CD8-positive, alpha-beta memory T cell (primary cell): ENCODE measurements at regions of chr1 and their contacts with region 1.

Region 1: DNA sequence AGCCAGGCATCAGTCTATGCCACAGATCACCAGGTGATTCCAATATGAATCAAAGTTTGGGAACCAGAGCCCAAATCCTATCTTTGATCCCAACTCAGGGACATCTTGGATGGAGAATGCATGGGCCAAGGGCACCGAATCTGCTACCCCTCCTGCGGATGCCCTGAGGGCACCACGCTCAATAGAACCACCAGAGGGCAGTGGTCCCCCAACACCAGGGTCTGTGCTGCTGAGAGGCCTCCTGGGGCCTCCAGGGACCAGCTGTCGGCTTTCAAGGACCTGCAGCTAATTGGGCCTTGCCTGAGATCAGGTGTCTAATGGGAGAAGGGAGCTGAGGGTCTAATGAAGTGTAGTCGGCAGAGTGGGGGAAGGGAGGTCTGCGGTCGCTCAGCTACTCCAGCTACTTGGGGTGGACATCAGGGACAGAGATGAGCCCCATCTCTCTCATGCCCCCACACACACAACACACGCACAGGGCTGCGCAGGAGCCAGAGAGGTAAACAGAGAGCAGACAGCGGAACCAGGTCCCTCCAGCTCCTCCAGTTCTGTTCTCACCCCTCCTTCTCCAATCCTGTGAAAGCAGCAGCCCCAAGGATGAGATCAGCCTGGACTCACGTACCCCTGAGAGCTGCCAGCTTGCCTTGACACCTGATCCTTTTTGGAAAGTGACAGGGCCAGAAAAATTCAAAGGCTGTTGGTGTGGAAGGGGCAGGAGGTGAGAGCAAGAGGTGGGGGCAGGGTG is 34.9 kb upstream of the PPP1R15B start:
- DNase-seq: peak; percentile 65 to 85 (median 69)
- H3K4me3 ChIP-seq: no peak overlapping the region
- H3K4me3 Mint-ChIP-seq: no peak overlapping the region
- H3K27ac ChIP-seq: no peak overlapping the region
- H3K27ac Mint-ChIP-seq: peak overlapping the region; percentile 48 to 99 (median 90)
- H3K4me1 ChIP-seq: peaks cover 8% of the 10 kb centered on the region
- H3K4me1 Mint-ChIP-seq: peaks cover 13 to 20% (median 18%) of the 10 kb centered on the region in 3 donors
- H3K27me3 ChIP-seq: no peaks in the 10 kb centered on the region
- H3K27me3 Mint-ChIP-seq: no peaks in the 10 kb centered on the region

Region 2: GRCh38 chr1:204431310-204432165 is 15.0 kb before region 1 on chr1:
- CTCF ChIA-PET with region 1: interaction called, 57 read pairs
- POLR2A ChIA-PET with region 1: no interaction called
- DNase-seq: peak; percentile 62 to 82 (median 68)
- H3K4me3 ChIP-seq: no peak overlapping the region
- H3K4me3 Mint-ChIP-seq: no peak overlapping the region
- H3K27ac ChIP-seq: no peak overlapping the region
- H3K27ac Mint-ChIP-seq: peak overlapping the region in 5 of 8 donors; percentile 17 to 71 (median 51)
- H3K4me1 ChIP-seq: no peaks in the 10 kb centered on the region
- H3K4me1 Mint-ChIP-seq: peaks cover 0 to 7% (median 4%) of the 10 kb centered on the region in 3 donors
- H3K27me3 ChIP-seq: no peaks in the 10 kb centered on the region
- H3K27me3 Mint-ChIP-seq: no peaks in the 10 kb centered on the region

Region 3: DNA sequence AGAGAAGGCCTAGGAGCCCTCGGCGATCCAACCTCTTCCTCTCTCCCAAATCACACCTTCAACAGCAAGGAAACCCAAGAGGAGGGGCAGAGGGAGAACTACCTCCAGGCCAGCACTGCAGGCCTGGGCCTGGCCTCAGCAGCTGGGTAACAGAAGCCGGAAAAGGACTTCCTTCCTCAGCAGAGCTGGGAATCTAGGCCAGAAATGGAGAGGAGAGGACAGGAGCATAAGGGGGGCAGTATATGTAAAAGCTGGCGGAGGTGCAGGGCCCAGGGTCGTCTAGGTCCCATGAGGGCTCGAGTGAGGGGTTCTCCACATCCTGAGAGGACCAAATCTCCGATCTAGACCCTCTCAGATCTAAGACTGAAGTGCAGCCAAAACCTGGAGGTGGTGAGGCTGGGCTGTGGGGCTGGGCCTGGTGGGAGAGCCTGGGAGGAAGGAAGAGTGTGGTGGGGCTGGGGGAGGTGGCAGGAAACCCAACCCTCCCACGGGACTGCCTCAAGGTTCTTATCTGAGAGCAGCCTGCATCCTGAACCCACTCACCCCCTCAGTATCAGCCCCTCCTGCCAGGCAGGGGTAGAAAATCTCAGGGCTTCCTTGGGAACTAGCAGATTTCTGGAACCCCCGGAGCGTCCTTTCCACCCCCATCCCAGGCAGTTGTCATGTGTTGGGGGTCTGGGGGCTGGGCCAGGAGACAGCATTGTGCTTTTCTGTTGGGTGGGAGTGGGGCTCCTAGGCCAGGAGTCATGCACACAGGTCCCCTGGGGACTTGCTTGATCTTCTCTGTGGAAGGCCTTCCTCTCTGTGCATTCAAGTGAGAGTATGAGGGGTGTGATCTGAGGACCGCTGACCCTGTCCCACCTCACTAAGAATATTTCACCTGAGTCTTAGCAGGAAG is 15.0 kb after region 1 on chr1:
- CTCF ChIA-PET with region 1: interaction called, 15 read pairs
- POLR2A ChIA-PET with region 1: no interaction called
- DNase-seq: peak in 3 of 5 donors; percentile 15 to 26 (median 20)
- H3K4me3 ChIP-seq: no peak overlapping the region
- H3K4me3 Mint-ChIP-seq: peak overlapping the region in 6 of 7 donors; percentile 55 to 71 (median 65)
- H3K27ac ChIP-seq: peak overlapping the region; percentile 10
- H3K27ac Mint-ChIP-seq: peak overlapping the region; percentile 76 to 94 (median 92)
- H3K4me1 ChIP-seq: peaks cover 44% of the 10 kb centered on the region
- H3K4me1 Mint-ChIP-seq: peaks cover 49 to 65% (median 64%) of the 10 kb centered on the region in 3 donors
- H3K27me3 ChIP-seq: no peaks in the 10 kb centered on the region
- H3K27me3 Mint-ChIP-seq: no peaks in the 10 kb centered on the region

Region 4: DNA sequence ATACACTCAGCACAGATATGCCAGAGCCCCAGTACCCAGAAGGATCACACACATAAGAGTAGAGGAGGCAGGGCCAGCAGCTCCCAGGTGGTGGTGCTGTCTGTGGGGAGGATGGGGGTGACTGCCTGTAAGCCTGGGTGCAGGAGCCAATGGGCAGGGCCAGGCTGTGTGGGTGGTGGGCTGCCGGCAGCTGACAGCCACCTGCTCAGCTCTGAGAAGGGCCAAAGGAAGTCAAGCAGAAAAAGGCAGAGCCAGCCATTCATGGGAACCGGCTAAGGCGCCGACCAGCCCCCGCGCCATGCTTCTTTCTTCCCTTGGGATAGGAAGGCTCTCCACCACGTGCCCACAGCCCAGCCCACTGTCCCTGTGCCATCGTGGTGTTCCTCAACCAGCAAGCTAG is 34.0 kb after region 1 on chr1:
- CTCF ChIA-PET with region 1: interaction called, 10 read pairs
- POLR2A ChIA-PET with region 1: no interaction called
- DNase-seq: no peak
- H3K4me3 ChIP-seq: no peak overlapping the region
- H3K4me3 Mint-ChIP-seq: peak overlapping the region in 3 of 7 donors; percentile 22 to 54 (median 24)
- H3K27ac ChIP-seq: no peak overlapping the region
- H3K27ac Mint-ChIP-seq: peak overlapping the region in 5 of 8 donors; percentile 29 to 63 (median 58)
- H3K4me1 ChIP-seq: peaks cover 34% of the 10 kb centered on the region
- H3K4me1 Mint-ChIP-seq: peaks cover 56 to 85% (median 84%) of the 10 kb centered on the region in 3 donors
- H3K27me3 ChIP-seq: no peaks in the 10 kb centered on the region
- H3K27me3 Mint-ChIP-seq: no peaks in the 10 kb centered on the region

Region 5: DNA sequence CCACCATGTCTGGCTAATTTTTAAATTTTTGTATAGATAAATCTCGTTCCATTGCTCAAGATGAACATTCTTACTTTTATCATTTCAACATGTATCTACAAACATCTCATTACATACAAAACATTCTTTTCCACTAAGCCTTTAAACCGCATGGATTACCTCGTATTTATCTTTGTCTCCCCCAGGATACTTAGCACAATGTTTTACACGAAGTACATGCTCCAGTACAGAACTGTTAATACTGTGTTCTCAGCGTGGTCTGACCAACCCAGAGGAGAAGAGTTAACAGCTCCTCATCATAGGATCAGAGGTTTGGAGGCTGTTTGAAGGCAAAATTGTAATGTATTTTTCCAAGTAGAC is 40.7 kb after region 1 on chr1:
- CTCF ChIA-PET with region 1: interaction called, 496 read pairs
- POLR2A ChIA-PET with region 1: no interaction called
- DNase-seq: no peak
- H3K4me3 ChIP-seq: no peak overlapping the region
- H3K4me3 Mint-ChIP-seq: no peak overlapping the region
- H3K27ac ChIP-seq: no peak overlapping the region
- H3K27ac Mint-ChIP-seq: peak overlapping the region in 2 of 8 donors; percentile 45 to 51
- H3K4me1 ChIP-seq: peaks cover 10% of the 10 kb centered on the region
- H3K4me1 Mint-ChIP-seq: peaks cover 38 to 71% (median 66%) of the 10 kb centered on the region in 3 donors
- H3K27me3 ChIP-seq: no peaks in the 10 kb centered on the region
- H3K27me3 Mint-ChIP-seq: no peaks in the 10 kb centered on the region

Region 6: GRCh38 chr1:204494281-204495077 is 47.9 kb after region 1 on chr1 and contains the start of gene PIK3C2B:
- CTCF ChIA-PET with region 1: interaction called, 496 read pairs
- POLR2A ChIA-PET with region 1: interaction called, 9 read pairs
- DNase-seq: peak; percentile 54 to 78 (median 69)
- H3K4me3 ChIP-seq: peak within 1 kb of the TSS; percentile 58
- H3K4me3 Mint-ChIP-seq: peak within 1 kb of the TSS; percentile 85 to 97 (median 94)
- H3K27ac ChIP-seq: peak within 1 kb of the TSS; percentile 77
- H3K27ac Mint-ChIP-seq: peak within 1 kb of the TSS; percentile 85 to 99 (median 96)
- H3K4me1 ChIP-seq: peaks cover 30% of the 10 kb centered on the region
- H3K4me1 Mint-ChIP-seq: peaks cover 40 to 57% (median 51%) of the 10 kb centered on the region in 3 donors
- H3K27me3 ChIP-seq: no peaks in the 10 kb centered on the region
- H3K27me3 Mint-ChIP-seq: peaks cover 0 to 2% of the 10 kb centered on the region in 2 donors
- total RNA-seq, gene PIK3C2B: 19.4 to 19.6 TPM

Region 7: GRCh38 chr1:204806943-204807687 is 360.6 kb after region 1 on chr1:
- CTCF ChIA-PET with region 1: interaction called, 12 read pairs
- POLR2A ChIA-PET with region 1: no interaction called
- DNase-seq: peak; percentile 66 to 86 (median 78)
- H3K4me3 ChIP-seq: peak overlapping the region; percentile 83
- H3K4me3 Mint-ChIP-seq: peak overlapping the region; percentile 56 to 93 (median 87)
- H3K27ac ChIP-seq: no peak overlapping the region
- H3K27ac Mint-ChIP-seq: peak overlapping the region in 4 of 8 donors; percentile 3 to 82 (median 66)
- H3K4me1 ChIP-seq: peaks cover 5% of the 10 kb centered on the region
- H3K4me1 Mint-ChIP-seq: peaks cover 1 to 9% (median 6%) of the 10 kb centered on the region in 3 donors
- H3K27me3 ChIP-seq: no peaks in the 10 kb centered on the region
- H3K27me3 Mint-ChIP-seq: peaks cover 1 to 3% of the 10 kb centered on the region in 2 donors